Activated CD4-positive, alpha-beta memory T cell treated with anti-CD3 and anti-CD28 coated beads for 36 hours (primary cell): ENCODE measurements at regions of chr15 and their contacts with region 1.

Region 1: DNA sequence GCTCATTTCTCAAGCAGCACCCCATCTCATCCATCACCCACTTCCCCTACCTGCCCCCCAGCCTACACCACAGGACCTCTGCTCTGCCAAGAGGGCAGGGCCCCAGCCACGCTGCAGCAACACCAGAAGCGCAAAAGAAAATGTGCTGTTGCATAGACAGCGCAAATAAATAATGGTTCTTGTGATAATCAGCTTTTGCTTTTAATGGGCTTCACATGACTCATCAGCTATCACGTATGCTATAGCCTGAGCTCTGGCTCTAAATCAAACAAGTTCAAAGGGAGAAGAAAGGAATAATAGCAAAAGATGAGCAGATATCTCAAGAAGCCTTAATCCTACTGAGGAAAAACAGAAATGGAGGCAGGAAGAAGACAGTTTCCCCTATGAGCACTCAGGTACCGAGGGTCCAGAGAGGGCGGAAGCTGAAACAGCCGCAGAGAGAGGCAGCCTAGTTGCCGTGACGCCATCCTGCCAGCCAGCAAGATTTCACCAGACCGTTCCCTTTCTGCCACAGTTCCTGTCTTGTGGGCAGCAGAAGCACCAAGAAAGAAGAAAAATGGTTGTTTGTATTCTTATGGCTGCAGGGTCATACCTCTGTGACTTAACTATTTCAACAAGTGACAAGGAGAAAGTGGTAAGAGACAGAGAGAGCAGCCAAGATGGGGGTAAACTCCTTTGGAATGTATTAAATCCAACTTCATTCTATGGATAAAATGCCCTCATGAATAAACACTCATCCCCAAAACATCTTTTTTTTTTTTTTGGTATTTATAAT is 22.0 kb downstream of the RAB27A start:
- DNase-seq: peak; percentile 83
- H3K4me3 Mint-ChIP-seq: peak overlapping the region; percentile 62
- H3K27ac Mint-ChIP-seq: peak overlapping the region; percentile 90
- H3K4me1 Mint-ChIP-seq: peaks cover 73% of the 10 kb centered on the region
- H3K27me3 Mint-ChIP-seq: no peaks in the 10 kb centered on the region

Region 2: DNA sequence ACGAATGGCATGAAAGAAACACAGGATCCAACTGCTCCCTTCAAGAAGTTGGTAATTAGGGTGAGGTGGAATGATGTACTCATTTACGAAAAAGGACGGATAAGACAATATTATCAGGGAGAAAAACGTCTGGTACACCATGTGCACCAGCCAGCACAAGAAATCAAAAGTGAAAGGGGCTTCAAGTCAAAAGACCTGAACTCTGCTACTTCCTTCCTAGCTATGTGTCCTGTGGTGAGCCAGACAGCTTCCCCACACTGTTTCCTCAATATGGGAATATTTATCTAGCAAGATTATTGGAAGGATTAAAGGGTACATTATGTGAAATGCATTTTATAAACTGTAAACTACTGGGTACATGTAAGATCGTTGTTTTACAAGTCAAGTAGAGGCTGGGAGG is 11.9 kb before region 1 on chr15:
- CTCF ChIA-PET with region 1: interaction called, 4 read pairs
- POLR2A ChIA-PET with region 1: interaction called, 5 read pairs
- intact Hi-C with region 1: loop called (anchors 1 kb)
- DNase-seq: no peak
- H3K4me3 Mint-ChIP-seq: peak overlapping the region; percentile 62
- H3K27ac Mint-ChIP-seq: peak overlapping the region; percentile 85
- H3K4me1 Mint-ChIP-seq: peaks cover 77% of the 10 kb centered on the region
- H3K27me3 Mint-ChIP-seq: no peaks in the 10 kb centered on the region

Region 3: DNA sequence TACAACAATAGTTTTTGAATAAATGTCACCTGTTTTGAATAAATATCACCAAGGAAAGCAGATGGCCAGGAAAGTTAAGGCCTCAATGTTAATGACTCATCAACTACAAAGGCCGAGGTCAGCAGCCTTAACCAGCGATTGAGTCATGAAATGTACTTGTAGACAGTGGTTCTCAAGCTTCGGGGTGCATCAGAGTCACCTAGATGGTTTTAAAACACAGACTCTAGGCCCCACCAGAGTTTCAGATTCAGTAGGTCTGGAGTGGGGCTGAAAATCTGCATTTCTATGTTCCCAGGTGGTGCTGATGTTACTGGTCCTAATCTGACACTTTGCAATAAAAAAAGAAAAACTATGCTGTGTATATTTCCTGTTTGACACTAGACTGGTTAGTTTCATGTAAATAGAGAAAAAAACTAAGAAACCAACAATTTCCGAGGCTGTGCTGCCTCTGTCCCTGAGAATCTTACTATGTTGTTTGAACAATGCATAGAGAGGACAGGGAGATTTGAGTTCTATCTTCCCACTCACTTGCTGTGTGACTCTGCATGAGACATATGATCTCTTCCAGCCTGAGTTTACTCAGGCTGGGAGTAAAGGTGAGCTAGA is 12.3 kb after region 1 on chr15:
- CTCF ChIA-PET with region 1: interaction called, 5 read pairs
- POLR2A ChIA-PET with region 1: interaction called, 15 read pairs
- intact Hi-C with region 1: loop called (anchors 1 kb)
- DNase-seq: peak; percentile 78
- H3K4me3 Mint-ChIP-seq: peak overlapping the region; percentile 34
- H3K27ac Mint-ChIP-seq: peak overlapping the region; percentile 98
- H3K4me1 Mint-ChIP-seq: peaks cover 93% of the 10 kb centered on the region
- H3K27me3 Mint-ChIP-seq: no peaks in the 10 kb centered on the region